ENCODE measurements at regions of chr10 and their contacts with region 1.

Region 1: DNA sequence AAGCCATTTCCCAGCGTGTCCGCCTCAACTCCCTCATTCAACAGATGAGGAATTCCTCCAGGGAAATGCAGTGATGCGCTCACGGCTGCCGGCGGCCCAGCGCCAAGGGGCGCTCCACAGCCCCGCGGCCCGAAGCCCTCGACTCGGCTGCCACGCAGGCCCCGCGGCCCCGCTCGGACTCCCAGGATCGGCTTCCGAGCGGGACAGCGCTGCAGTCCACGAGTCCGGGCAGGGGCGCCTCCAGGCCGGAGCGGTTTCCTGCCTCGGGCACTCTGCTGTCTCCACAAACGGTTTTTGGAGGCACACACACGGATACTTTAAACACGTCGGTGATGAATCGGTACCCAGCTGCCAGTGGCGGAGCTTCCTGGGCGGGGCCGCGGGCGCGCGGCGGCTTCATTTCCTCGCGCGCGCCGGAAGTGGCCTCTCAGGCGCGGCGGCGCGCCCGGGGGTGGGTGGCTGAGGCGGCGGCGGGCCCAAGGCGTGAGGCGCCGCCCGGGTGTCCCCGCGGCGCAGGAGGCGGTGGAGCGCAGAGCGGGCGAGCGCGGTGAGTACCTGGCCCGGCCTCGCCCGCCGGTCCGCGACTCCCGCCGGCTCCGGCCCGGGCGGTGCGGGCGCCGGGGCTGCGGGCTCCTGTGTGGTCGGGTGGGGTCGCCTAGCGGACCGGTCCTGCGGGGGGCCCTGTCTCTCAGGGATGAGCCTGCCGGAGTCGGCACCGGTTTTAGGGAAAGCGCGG is at the start of gene CSGALNACT2:
- DNase-seq: peak; percentile 92
- H3K4me3 Mint-ChIP-seq: peak within 1 kb of the TSS; percentile 94
- H3K27ac Mint-ChIP-seq: peak within 1 kb of the TSS; percentile 99
- H3K4me1 Mint-ChIP-seq: peaks cover 71% of the 10 kb centered on the region
- H3K27me3 Mint-ChIP-seq: no peaks in the 10 kb centered on the region
- total RNA-seq, gene CSGALNACT2: 64.8 to 66.2 TPM

Region 2: GRCh38 chr10:42888504-42889095 is 249.6 kb before region 1 on chr10:
- CTCF ChIA-PET with region 1: no interaction called
- POLR2A ChIA-PET with region 1: no interaction called
- DNase-seq: no peak
- H3K4me3 Mint-ChIP-seq: no peak overlapping the region
- H3K27ac Mint-ChIP-seq: no peak overlapping the region
- H3K4me1 Mint-ChIP-seq: no peaks in the 10 kb centered on the region
- H3K27me3 Mint-ChIP-seq: peaks cover 4% of the 10 kb centered on the region

Region 3: GRCh38 chr10:43055991-43056567 is 82.1 kb before region 1 on chr10:
- CTCF ChIA-PET with region 1: no interaction called
- POLR2A ChIA-PET with region 1: no interaction called
- DNase-seq: no peak
- H3K4me3 Mint-ChIP-seq: no peak overlapping the region
- H3K27ac Mint-ChIP-seq: no peak overlapping the region
- H3K4me1 Mint-ChIP-seq: no peaks in the 10 kb centered on the region
- H3K27me3 Mint-ChIP-seq: peaks cover 22% of the 10 kb centered on the region

Region 4: DNA sequence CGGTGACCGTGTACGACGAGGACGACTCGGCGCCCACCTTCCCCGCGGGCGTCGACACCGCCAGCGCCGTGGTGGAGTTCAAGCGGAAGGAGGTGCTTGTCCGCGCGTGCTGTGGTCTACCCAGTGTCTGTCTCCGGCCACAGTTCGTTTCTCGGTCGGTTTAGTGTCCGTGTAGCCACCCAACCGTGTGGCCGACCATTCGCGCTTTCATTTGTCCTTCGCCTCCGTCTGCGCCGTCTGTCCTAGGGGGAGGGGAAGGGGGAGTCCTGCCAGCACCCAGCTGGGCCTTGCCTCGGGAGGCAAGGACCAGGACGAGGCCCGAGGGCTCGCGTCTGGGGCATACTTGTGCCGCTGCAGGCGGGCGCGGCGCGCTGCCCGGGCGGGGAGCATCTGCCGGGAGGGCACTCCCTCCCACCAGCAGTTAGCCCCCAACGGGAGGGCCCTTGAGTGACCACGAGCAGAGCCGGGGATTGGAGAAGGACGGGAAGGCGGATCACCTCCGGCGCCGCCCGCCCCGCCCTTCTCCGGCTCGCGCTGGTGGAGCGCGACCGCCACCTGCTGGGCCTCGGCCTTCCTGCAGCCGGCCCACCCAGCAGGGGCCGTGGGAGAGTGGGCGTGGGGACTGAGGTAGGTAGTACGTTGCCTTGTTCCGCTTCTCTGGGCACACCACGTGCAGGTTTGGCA is 32.9 kb before region 1 on chr10:
- CTCF ChIA-PET with region 1: interaction called, 5 read pairs
- POLR2A ChIA-PET with region 1: interaction called, 10 read pairs
- DNase-seq: peak; percentile 82
- H3K4me3 Mint-ChIP-seq: peak overlapping the region; percentile 65
- H3K27ac Mint-ChIP-seq: peak overlapping the region; percentile 21
- H3K4me1 Mint-ChIP-seq: peaks cover 27% of the 10 kb centered on the region
- H3K27me3 Mint-ChIP-seq: peaks cover 27% of the 10 kb centered on the region

Region 5: GRCh38 chr10:43153901-43154300 is 15.7 kb after region 1 on chr10:
- CTCF ChIA-PET with region 1: interaction called, 3 read pairs
- POLR2A ChIA-PET with region 1: interaction called, 10 read pairs
- DNase-seq: no peak
- H3K4me3 Mint-ChIP-seq: no peak overlapping the region
- H3K27ac Mint-ChIP-seq: no peak overlapping the region
- H3K4me1 Mint-ChIP-seq: peaks cover 53% of the 10 kb centered on the region
- H3K27me3 Mint-ChIP-seq: no peaks in the 10 kb centered on the region

Region 6: GRCh38 chr10:43170491-43170890 is 32.3 kb after region 1 on chr10:
- CTCF ChIA-PET with region 1: interaction called, 4 read pairs
- POLR2A ChIA-PET with region 1: interaction called, 40 read pairs
- DNase-seq: no peak
- H3K4me3 Mint-ChIP-seq: no peak overlapping the region
- H3K27ac Mint-ChIP-seq: no peak overlapping the region
- H3K4me1 Mint-ChIP-seq: peaks cover 37% of the 10 kb centered on the region
- H3K27me3 Mint-ChIP-seq: no peaks in the 10 kb centered on the region

Region 7: GRCh38 chr10:43287056-43288007 is 149.1 kb after region 1 on chr10:
- CTCF ChIA-PET with region 1: interaction called, 3 read pairs
- POLR2A ChIA-PET with region 1: interaction called, 19 read pairs
- DNase-seq: peak; percentile 86
- H3K4me3 Mint-ChIP-seq: peak overlapping the region; percentile 26
- H3K27ac Mint-ChIP-seq: peak overlapping the region; percentile 88
- H3K4me1 Mint-ChIP-seq: peaks cover 58% of the 10 kb centered on the region
- H3K27me3 Mint-ChIP-seq: peaks cover 9% of the 10 kb centered on the region

Region 8: DNA sequence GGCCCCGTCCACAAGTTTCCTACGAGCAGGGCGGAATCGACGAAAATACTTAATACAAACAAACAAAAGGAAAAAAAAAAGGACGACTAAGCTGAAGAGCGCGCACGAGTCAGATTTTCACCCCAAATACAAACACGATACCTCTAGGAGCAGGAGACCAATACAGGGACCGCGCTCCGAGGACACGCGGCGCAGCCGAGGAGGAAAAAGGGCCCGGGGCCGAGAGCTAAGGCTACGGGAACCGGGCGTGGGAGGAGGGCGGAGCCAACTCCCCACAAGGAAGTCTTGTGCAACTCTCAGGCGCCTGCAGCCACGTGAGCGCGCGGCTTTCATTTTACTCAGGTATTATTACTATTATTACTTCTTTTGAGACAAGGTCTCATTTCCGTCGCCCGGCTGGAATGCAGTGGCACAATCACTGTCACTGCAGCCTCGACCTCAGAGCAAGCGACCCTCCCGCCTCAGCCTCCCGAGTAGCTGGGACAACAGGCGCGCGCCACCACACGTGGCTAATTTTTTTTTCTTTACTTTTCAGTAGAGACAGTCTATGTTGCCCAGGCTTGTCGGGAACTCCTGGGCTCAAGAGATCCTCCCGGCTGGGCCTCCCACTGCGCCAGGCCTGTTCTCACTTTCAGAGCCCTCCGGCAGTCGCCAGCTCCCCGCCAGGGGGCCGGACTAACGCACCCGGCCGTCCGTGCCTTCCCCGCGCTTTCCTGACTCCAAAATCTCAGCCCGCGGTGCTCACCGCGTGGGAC is 269.6 kb after region 1 on chr10:
- CTCF ChIA-PET with region 1: no interaction called
- POLR2A ChIA-PET with region 1: interaction called, 31 read pairs
- DNase-seq: peak; percentile 88
- H3K4me3 Mint-ChIP-seq: peak overlapping the region; percentile 86
- H3K27ac Mint-ChIP-seq: peak overlapping the region; percentile 96
- H3K4me1 Mint-ChIP-seq: peaks cover 36% of the 10 kb centered on the region
- H3K27me3 Mint-ChIP-seq: no peaks in the 10 kb centered on the region